PC-9 (cell line): ENCODE measurements at regions of chr14 and their contacts with region 1.

Region 1: DNA sequence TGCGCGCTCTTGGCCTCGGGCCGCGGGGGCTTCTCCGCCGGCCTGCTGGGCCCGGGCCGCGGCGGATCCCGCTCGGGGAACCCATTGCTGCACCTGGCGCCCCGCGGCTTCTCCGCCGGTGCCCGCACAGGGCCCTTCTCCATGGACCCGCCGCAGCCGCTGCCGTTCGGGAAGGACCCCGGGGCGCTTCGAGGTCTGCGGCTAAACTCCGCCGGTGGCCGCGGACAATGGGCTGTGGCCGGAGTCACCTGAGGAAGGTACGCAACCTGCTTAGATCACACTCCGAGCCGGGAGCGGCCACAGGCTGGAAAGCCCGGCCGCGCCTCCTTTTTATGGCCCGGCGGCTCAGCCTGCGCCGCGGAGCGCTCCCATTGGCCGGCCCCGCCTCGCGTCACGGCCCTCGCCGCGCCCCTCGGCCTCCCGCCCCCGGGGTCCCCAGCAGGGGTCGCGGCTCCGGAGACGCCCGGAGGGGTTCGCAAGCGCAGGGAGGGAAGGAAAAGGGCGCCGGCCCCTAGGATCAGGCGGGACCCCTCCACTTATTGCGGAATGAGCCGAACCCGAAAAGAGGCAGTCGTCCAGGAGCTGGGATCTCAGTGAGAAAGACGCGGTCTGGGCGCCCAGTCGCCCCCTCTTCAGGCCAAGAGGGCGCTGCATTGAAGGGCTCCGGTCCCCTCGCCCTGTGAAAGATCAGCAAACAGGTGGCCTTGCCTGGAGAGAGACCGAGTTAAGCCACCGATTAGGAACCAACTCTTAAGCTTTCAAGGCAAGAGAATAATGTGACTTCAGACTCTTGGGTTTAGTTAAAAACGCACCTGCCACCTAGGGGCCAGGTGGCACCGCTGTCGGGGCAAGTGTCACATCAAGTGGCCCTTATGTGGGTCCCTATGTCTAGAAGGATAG is at the start of gene GCH1:
- DNase-seq: peak; percentile 64 to 82
- H3K4me3 ChIP-seq: peak within 1 kb of the TSS; percentile 81
- H3K27ac ChIP-seq: peak within 1 kb of the TSS; percentile 25
- H3K4me1 ChIP-seq: peaks cover 9% of the 10 kb centered on the region
- H3K27me3 ChIP-seq: no peaks in the 10 kb centered on the region
- CTCF ChIP-seq: peak; percentile 65
- total RNA-seq, gene GCH1: 4.1 and 5.1 TPM in 2 replicates

Region 2: GRCh38 chr14:54778618-54779345 is 124.0 kb before region 1 on chr14:
- CTCF ChIA-PET with region 1: interaction called, 3 read pairs
- POLR2A ChIA-PET with region 1: interaction called, 17 read pairs
- intact Hi-C with region 1: no loop called
- DNase-seq: no peak
- H3K4me3 ChIP-seq: no peak overlapping the region
- H3K27ac ChIP-seq: no peak overlapping the region
- H3K4me1 ChIP-seq: peaks cover 5% of the 10 kb centered on the region; the same call in 1 of the 2 replicates
- H3K27me3 ChIP-seq: no peaks in the 10 kb centered on the region
- CTCF ChIP-seq: no peak

Region 3: DNA sequence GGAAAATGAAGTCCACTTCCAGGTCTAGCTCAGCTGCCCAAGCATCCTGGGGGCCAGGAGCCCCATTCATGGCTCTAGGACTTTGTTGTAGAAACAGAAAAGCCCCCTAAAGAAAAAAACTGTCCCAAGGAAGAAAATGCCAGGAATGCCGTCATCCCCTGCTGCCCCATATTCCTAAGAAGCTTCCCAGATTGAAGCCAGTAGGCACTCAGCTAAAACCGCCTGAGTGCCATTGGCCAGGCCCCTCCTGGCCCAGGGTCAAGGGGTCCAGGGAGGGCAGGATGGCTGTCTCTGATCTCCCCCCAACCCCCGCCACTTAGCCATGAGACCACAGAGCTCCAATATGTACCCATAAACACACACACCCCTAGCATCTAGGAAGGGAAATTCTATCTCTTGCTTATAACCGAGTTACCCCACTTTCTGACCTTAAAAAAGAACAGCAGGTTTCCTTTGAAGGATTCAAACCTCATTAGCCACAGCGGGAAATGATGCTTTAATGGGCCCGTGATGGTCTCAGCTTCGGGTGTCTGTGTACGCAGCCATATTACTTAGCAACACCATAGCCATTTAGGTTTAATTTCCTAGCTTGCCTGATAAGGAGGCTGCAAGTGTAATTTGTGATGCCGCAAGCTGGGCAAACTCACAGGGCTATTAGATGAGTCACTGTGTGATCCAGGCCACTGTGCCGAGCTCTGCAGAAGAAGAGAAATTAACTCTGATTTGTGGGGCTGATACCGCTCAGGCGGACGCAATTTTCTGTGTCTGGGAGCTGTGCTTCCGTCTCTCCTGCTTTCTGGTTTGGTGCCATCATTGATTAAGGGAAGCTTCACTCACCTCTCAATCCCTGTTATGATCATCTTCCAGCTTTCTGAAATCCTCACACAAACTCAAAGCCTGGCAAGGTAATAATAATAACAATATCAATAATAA is 84.3 kb before region 1 on chr14:
- CTCF ChIA-PET with region 1: no interaction called
- POLR2A ChIA-PET with region 1: no interaction called
- intact Hi-C with region 1: loop called (anchors 5 kb)
- DNase-seq: peak; percentile 49 to 75
- H3K4me3 ChIP-seq: no peak overlapping the region; the same call in 1 of the 2 replicates
- H3K27ac ChIP-seq: no peak overlapping the region
- H3K4me1 ChIP-seq: peaks cover 11% of the 10 kb centered on the region
- H3K27me3 ChIP-seq: no peaks in the 10 kb centered on the region
- CTCF ChIP-seq: no peak

Region 4: DNA sequence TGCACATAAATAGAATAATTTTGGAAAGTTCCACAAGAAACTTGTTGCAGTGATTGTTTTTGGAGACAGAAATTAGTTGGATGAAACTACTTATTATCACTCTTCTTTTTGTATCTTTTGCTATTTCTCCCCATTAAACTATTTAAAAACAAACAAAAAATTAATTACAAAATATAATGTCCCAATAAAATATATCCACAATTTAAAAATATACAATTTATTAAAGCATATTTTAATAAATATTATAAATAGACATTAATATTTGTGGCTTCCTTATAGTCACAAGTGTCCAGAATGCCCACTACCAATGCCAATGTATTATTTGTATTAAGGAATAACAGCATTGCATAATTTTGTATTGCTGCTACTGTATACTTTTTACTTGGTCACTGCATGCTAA is 52.4 kb after region 1 on chr14:
- CTCF ChIA-PET with region 1: no interaction called
- POLR2A ChIA-PET with region 1: no interaction called
- intact Hi-C with region 1: no loop called
- DNase-seq: no peak
- H3K4me3 ChIP-seq: no peak overlapping the region
- H3K27ac ChIP-seq: no peak overlapping the region
- H3K4me1 ChIP-seq: no peaks in the 10 kb centered on the region
- H3K27me3 ChIP-seq: no peaks in the 10 kb centered on the region
- CTCF ChIP-seq: no peak

Region 5: GRCh38 chr14:55160989-55161388 is 258.2 kb after region 1 on chr14:
- CTCF ChIA-PET with region 1: no interaction called
- POLR2A ChIA-PET with region 1: interaction called, 31 read pairs
- intact Hi-C with region 1: no loop called
- DNase-seq: no peak
- H3K4me3 ChIP-seq: no peak overlapping the region
- H3K27ac ChIP-seq: no peak overlapping the region
- H3K4me1 ChIP-seq: no peaks in the 10 kb centered on the region
- H3K27me3 ChIP-seq: no peaks in the 10 kb centered on the region
- CTCF ChIP-seq: peak; percentile 74